ENCODE measurements at regions of chr6 and their contacts with region 1.

Region 1: GRCh38 chr6:166402582-166403277 is 20.0 kb upstream of the MPC1 start:
- DNase-seq: no peak
- H3K4me3 Mint-ChIP-seq: no peak overlapping the region
- H3K27ac Mint-ChIP-seq: no peak overlapping the region
- H3K4me1 Mint-ChIP-seq: peaks cover 3% of the 10 kb centered on the region
- H3K27me3 Mint-ChIP-seq: peaks cover 2% of the 10 kb centered on the region

Region 2: DNA sequence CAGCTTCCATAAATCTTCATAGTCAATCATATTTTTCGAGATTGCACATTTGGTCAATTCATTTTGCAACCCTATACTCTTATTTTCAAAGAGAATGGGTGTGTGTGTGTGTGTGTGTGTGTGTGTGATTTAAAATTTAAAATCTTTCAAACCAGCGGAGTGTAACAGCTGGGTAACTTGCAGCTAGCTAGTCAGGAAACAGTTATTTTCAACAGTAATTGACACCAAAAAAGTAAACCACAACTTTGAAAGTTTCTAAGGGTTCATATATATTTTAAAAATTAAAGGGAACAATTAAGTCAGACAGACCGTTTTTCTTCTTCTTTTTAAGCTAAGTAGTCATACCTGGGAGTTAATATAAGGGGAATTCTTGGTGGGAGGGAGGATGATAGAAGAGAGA is 151.5 kb before region 1 on chr6:
- CTCF ChIA-PET with region 1: interaction called, 10 read pairs
- POLR2A ChIA-PET with region 1: no interaction called
- intact Hi-C with region 1: no loop called
- DNase-seq: no peak
- H3K4me3 Mint-ChIP-seq: no peak overlapping the region
- H3K27ac Mint-ChIP-seq: no peak overlapping the region
- H3K4me1 Mint-ChIP-seq: peaks cover 11% of the 10 kb centered on the region
- H3K27me3 Mint-ChIP-seq: peaks cover 18% of the 10 kb centered on the region

Region 3: DNA sequence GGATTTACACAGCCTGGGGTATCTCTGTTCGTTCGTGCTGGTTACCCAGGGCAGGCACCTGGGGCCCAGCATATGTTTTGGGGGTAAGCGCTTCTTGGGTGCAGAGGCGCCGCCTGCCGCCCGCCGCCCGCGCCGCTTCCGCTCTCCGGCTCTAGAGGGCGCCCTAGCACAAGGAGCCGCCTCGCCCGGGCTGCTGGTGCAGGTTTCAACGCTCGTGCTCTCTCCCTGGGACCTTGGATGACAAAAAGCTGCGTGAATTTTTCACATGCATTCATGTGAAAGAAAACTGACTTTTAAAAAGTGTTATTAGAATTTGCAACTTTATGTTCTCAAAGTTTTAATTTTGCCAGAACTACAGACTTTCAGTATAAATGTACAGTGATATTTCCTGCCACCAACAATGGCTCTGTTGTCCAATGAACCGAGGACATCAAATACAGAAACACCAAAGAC is 127.0 kb before region 1 on chr6:
- CTCF ChIA-PET with region 1: interaction called, 82 read pairs
- POLR2A ChIA-PET with region 1: no interaction called
- intact Hi-C with region 1: loop called (anchors 1 kb)
- DNase-seq: peak; percentile 84
- H3K4me3 Mint-ChIP-seq: no peak overlapping the region
- H3K27ac Mint-ChIP-seq: no peak overlapping the region
- H3K4me1 Mint-ChIP-seq: peaks cover 5% of the 10 kb centered on the region
- H3K27me3 Mint-ChIP-seq: no peaks in the 10 kb centered on the region

Region 4: GRCh38 chr6:166281104-166281503 is 121.6 kb before region 1 on chr6:
- CTCF ChIA-PET with region 1: interaction called, 82 read pairs
- POLR2A ChIA-PET with region 1: no interaction called
- intact Hi-C with region 1: no loop called
- DNase-seq: no peak
- H3K4me3 Mint-ChIP-seq: no peak overlapping the region
- H3K27ac Mint-ChIP-seq: no peak overlapping the region
- H3K4me1 Mint-ChIP-seq: no peaks in the 10 kb centered on the region
- H3K27me3 Mint-ChIP-seq: peaks cover 3% of the 10 kb centered on the region

Region 5: GRCh38 chr6:166313255-166314070 is 89.3 kb before region 1 on chr6:
- CTCF ChIA-PET with region 1: interaction called, 80 read pairs
- POLR2A ChIA-PET with region 1: no interaction called
- intact Hi-C with region 1: loop called (anchors 1 kb)
- DNase-seq: peak; percentile 65
- H3K4me3 Mint-ChIP-seq: no peak overlapping the region
- H3K27ac Mint-ChIP-seq: no peak overlapping the region
- H3K4me1 Mint-ChIP-seq: no peaks in the 10 kb centered on the region
- H3K27me3 Mint-ChIP-seq: peaks cover 18% of the 10 kb centered on the region

Region 6: DNA sequence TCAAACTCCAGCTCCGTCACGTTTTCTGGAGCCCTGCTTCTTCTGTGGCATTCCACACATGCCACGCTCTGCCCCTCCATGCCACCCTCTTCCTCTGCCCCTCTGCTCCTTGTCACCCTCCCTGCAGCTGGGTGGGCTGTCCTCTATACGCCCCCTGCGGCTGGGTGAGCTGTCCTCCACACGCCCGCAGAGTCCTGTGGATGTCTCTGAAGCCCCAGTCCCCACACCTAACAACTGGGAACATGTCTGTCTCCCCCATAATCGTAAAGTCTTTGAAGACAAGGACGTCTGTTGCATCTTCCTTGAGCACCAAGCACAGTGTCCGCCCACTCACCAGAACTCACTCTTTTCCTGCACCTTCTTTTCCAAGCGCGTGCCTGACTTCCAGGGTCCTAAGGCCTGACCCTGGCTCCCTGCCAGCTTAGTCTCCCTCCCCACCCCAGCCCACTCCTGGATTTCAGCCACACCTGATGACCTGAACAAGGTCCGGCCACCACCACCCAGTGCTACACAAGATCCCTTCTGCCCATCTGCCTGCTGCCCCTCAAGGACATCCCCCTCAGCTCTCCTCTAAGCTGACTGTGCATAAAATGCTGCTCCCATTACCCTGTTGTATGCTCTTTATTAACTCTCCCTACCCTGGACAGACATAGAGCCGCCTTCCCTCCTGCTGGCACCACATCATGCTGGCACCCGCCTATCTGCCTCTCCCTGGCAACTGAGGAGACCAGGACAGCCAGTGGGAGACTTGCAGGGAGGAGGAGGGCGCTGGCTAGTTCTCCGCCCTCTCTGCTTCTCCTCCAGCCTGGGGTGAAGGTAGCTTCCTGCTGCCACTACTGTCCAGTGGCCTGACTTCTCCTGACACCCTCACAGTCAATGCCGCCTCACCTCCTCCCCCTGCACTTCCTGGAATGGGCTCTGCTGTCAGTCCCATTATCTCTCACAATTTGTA is 83.8 kb before region 1 on chr6:
- CTCF ChIA-PET with region 1: interaction called, 80 read pairs
- POLR2A ChIA-PET with region 1: no interaction called
- intact Hi-C with region 1: no loop called
- DNase-seq: no peak
- H3K4me3 Mint-ChIP-seq: no peak overlapping the region
- H3K27ac Mint-ChIP-seq: no peak overlapping the region
- H3K4me1 Mint-ChIP-seq: no peaks in the 10 kb centered on the region
- H3K27me3 Mint-ChIP-seq: no peaks in the 10 kb centered on the region

Measured in activated CD4-positive, alpha-beta memory T cell treated with anti-CD3 and anti-CD28 coated beads for 36 hours (primary cell).